Adrenal gland (tissue), 19 donors: ENCODE measurements at regions of chr6 and their contacts with region 1.

Region 1: GRCh38 chr6:129590408-129591022 is 119.5 kb downstream of the ARHGAP18 start:
- DNase-seq: no peak
- H3K4me3 ChIP-seq: no peak overlapping the region
- H3K27ac ChIP-seq: no peak overlapping the region
- H3K4me1 ChIP-seq: peaks cover 0 to 4% of the 10 kb centered on the region in 2 donors
- H3K27me3 ChIP-seq: no peaks in the 10 kb centered on the region
- CTCF ChIP-seq: no peak
- POLR2A ChIP-seq: no peak

Region 2: GRCh38 chr6:129730477-129731165 is 140.1 kb after region 1 on chr6:
- intact Hi-C with region 1: loop called in 1 of 2 experiments (anchors 5 kb)
- DNase-seq: no peak
- H3K4me3 ChIP-seq: no peak overlapping the region
- H3K27ac ChIP-seq: no peak overlapping the region
- H3K4me1 ChIP-seq: peaks cover 0 to 25% of the 10 kb centered on the region in 2 donors
- H3K27me3 ChIP-seq: no peaks in the 10 kb centered on the region
- CTCF ChIP-seq: peak; percentile 19 to 72 (median 62)
- POLR2A ChIP-seq: no peak